Right ventricle myocardium superior (tissue), 1 donor: ENCODE measurements at regions of chr11 and their contacts with region 1.

Region 1: DNA sequence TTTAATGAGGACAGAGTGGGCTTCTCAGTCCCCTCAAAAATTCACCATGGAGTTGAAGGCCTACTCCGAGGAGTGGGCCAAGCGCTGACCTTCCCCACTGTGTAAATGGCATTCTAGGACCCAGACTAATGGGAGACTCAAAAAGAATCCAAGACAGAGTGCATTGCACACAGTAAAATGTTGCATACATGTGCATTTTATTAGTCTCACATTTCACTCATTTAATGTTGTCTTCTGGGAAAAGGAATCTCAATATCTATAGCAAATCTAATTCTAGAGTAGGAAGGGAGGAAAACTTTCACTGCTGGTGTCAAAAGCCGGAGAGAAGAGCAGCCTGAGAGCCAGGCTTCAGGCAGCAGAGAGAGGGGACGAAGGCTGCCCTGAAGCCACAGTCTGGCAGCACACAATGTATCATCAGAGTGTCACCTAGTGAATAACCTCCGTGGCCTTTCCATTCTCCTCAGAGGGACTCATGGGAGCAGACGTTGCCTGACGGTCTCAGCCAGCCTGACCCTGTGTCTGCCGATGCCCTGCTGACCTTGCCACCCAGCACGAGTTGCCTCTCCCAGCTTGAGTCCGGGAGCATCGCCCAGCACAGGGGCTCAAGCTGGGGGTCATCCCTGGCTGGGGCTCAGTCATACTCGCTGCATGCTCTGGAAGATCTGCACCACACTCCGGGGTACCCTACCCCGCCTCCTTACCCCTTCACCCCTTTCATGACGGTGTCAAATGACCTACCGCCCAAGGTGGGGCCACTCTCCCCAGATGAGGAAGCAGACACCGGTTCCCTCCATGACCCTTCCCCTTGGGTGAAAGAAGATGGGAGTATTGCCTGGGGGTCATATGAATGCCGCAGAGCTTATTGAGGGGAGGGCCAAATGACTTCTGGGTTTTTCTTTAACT is 12.9 kb upstream of the POU2AF3 start:
- DNase-seq: no peak
- ATAC-seq: no peak

Region 2: GRCh38 chr11:111250936-111251335 is 34.5 kb before region 1 on chr11:
- intact Hi-C with region 1: no loop called
- DNase-seq: no peak
- ATAC-seq: no peak

Region 3: GRCh38 chr11:111344032-111344431 is 58.6 kb after region 1 on chr11:
- intact Hi-C with region 1: no loop called
- DNase-seq: peak; percentile 77
- ATAC-seq: peak; percentile 79

Region 4: DNA sequence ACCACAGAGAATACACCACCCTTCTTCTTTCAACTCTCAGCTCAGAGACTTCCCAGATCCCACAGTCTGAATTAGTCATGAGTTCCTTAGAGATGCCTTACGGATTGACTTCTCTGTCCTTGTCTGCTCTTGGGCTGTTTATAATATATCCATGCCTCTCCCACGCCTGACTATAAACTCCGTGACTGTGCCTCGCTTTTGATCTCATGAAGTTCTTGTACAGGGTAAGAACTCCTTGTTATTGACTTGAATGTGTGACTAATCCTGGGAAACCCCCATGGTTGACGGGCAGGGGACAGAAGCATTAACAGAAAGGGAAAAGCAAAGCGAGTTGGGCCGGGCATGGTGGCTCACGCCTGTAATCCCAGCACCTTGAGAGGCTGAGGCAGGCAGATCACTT is 156.0 kb after region 1 on chr11:
- intact Hi-C with region 1: loop called (anchors 5 kb)
- DNase-seq: no peak
- ATAC-seq: no peak